Sigmoid colon (tissue), 7 donors: ENCODE measurements at regions of chr2 and their contacts with region 1.

Region 1: DNA sequence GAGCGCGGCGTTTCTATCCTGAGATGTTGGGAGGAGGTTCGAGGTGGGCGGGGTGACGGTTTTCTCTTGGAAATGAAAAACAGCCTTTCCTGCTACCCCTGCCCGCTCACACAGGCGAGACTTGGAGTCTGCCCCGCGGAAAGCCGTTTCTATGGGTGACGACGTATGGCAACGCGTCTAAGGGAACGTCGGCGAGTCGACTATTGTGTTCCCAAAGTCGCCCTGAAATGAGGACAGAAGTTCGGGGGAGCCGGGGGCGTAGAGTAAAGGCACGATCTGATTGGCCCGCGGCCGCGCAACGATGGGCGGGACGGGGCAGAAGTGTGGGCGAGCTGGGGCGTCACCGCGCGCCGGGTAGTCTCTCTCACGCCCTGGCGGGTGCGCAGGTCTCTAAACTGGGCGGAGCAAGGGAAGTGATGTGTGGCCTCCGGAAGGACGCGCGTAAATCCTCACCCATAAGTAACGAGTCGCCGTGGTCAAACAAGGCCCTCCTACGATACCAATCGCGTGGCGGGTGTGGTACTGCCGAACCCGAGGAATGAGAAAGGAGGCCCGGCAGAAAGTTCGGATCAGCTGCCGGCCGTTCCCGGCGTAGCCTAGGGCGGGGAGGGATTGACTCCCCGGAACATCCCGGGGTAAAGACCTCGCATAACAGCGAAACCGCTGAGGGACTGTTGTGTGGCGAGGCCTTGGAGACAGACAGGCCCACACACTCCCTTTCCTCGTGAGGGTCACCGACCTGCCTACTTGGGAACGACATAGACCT is 89.6 kb downstream of the FAM161A start:
- DNase-seq: peak; percentile 99
- H3K4me3 ChIP-seq: peak overlapping the region; percentile 59 to 77 (median 68)
- H3K27ac ChIP-seq: peak overlapping the region; percentile 93 to 99 (median 97)
- H3K4me1 ChIP-seq: peaks cover 0 to 15% (median 5%) of the 10 kb centered on the region in 4 donors
- H3K27me3 ChIP-seq: no peaks in the 10 kb centered on the region
- CTCF ChIP-seq: no peak
- EP300 ChIP-seq: peak in 2 of 4 donors; percentile 28 to 62
- POLR2A ChIP-seq: peak; percentile 76 to 84

Region 2: GRCh38 chr2:61144697-61145268 is 619.4 kb before region 1 on chr2:
- intact Hi-C with region 1: loop called (anchors 10 kb)
- DNase-seq: peak; percentile 99
- H3K4me3 ChIP-seq: peak overlapping the region; percentile 26 to 59 (median 58)
- H3K27ac ChIP-seq: peak overlapping the region; percentile 76 to 84 (median 81)
- H3K4me1 ChIP-seq: peaks cover 0 to 14% (median 7%) of the 10 kb centered on the region in 4 donors
- H3K27me3 ChIP-seq: no peaks in the 10 kb centered on the region
- CTCF ChIP-seq: no peak
- EP300 ChIP-seq: peak in 1 of 4 donors; percentile 31
- POLR2A ChIP-seq: peak; percentile 28 to 33

Region 3: DNA sequence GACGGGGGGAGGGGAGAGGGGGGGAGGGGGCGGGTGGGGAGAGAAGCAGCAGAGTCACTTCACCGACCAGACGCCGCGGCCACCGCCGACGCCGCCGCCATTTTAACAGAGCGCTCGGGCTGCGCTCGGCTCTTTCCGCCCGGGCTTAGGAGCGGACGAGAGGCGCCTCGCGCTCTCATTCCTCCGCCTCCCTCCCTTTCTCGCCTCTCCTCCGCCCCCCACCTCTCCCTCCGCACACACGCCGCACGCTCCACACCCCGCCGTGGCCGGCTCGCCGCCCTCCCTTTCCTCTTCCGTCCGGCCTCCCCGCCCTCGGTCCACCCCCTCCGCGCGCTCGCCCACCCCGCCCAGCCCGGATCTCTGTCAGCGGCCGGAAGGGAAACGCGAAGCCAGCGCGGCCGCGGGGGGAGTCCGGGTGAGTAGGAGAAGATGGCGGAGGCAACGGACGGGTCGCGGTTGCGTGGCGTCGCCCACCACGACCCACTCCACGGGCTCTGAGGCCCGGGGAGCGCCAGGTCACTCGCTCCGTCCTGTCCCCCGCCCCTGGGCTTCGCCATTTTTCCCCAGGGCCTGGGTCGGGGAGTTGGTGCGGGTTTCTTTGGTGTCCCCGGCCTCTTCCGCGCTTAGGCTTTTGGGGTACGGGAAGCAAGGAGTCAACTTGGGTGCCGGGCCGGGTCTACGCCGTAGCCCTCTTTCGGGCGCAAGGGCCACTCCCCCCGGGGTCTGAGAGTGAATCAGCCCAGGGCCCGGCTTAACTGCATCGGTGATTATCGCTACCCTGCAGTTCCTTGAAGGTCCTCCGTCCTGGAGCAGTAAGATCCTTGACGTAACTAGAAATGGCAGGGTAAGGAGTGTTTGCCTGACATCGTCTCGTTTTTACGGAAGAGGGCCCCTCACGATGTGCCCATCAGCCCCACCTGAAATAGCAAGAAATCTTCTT is 293.0 kb before region 1 on chr2 and contains the start of gene USP34:
- intact Hi-C with region 1: loop called (anchors 5 kb)
- DNase-seq: peak; percentile 97
- H3K4me3 ChIP-seq: peak within 1 kb of the TSS; percentile 79 to 90 (median 84)
- H3K27ac ChIP-seq: peak within 1 kb of the TSS; percentile 95 to 99 (median 97)
- H3K4me1 ChIP-seq: peaks cover 0 to 40% (median 30%) of the 10 kb centered on the region in 4 donors
- H3K27me3 ChIP-seq: no peaks in the 10 kb centered on the region
- CTCF ChIP-seq: no peak
- EP300 ChIP-seq: peak in 1 of 4 donors; percentile 12
- POLR2A ChIP-seq: peak; percentile 75 to 79
- total RNA-seq, gene USP34: 135 to 158 (median 140) TPM

Region 4: DNA sequence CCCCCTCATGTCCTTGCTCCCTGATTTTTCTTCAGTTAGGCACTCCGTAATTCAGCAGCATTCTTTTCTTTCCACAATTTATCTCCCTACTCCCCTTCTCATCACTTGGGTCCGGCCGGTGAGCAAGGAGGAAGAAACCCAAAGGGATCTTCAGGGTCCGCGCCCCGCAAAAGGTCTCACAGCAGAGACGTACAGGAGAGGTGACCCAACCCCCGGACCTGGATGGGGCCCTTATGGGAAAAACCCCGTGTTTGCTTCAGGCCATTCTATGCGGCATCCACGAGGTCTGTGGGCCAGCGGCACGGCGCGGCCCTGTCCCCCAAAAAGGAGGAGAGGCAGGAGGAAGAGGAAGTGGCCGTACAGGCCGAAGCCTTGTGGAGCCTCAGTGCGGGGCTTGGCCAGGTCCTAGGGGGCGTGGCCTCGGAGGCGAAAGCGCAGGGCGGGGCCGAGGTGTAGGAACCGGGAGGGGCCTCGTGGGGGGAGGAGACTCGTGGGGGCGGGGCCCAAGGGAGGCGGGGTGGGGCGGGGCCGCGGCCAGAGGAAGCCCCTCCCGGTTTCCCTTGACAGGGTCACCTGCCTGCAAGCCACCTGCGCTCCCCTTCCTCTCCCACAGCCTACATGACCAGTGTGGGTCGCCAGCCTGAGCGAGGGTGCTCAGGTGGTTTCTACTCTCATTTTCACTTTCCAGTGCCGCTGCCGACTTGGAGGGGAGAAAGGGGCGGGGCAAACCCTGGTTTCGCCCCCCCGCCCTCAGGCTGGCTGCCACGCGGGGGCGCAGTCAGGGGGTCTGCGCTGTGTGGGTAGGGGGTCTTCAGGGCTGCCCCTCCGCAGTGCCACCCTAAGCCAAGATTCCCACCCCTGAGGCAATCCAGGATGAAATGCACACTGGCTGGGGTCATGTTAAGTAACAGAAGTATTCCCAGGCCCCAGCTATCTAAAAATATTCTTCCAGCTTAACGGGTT is 69.6 kb before region 1 on chr2:
- intact Hi-C with region 1: loop called (anchors 2 kb)
- DNase-seq: peak; percentile 97
- H3K4me3 ChIP-seq: peak overlapping the region; percentile 80 to 88 (median 85)
- H3K27ac ChIP-seq: peak overlapping the region; percentile 82 to 86 (median 84)
- H3K4me1 ChIP-seq: peaks cover 0 to 14% (median 12%) of the 10 kb centered on the region in 4 donors
- H3K27me3 ChIP-seq: no peaks in the 10 kb centered on the region
- CTCF ChIP-seq: peak; percentile 5 to 49 (median 25)
- EP300 ChIP-seq: no peak
- POLR2A ChIP-seq: peak; percentile 33 to 60

Region 5: DNA sequence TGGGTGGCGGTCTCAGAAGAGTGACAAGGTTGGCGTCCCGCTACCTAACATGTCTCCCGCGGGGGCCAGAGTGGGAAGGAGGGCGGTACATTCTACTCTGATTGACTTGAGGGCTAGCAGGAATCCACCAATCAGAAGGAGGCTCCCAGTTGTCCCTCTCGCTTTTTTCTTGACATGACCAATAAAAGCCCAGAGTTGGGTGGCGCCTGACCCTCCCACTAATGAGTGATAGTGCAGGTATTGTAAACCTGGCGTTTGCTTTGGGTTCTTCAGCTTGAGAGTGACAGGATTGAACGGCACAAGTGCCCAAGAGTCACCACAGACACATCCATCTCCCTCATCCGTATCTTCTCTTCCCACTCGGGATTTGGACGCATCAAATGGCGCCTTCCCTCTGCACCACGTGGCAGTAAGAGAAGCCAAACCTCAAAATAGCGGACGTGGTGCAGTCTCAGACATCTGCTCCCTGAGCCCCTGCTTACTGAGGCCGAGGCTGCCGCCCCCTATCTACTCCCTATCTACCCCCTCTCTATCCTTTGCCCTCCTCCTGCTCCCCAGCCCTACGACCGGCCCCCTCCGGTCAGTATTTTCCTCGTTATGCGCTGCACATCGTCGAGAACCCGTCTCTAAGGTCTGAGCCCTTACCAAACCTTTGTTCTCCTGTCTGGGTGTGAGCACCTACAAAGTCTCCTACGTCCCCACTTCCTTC is 90.4 kb after region 1 on chr2:
- intact Hi-C with region 1: loop called (anchors 1 kb)
- DNase-seq: peak; percentile 95
- H3K4me3 ChIP-seq: peak overlapping the region; percentile 66 to 87 (median 77)
- H3K27ac ChIP-seq: peak overlapping the region; percentile 88 to 91 (median 90)
- H3K4me1 ChIP-seq: peaks cover 0 to 14% (median 13%) of the 10 kb centered on the region in 4 donors
- H3K27me3 ChIP-seq: no peaks in the 10 kb centered on the region
- CTCF ChIP-seq: no peak
- EP300 ChIP-seq: no peak
- POLR2A ChIP-seq: no peak